Activated CD4-positive, alpha-beta memory T cell treated with anti-CD3 and anti-CD28 coated beads, Interleukin-2, amount 10 ng/mL, durations not matched to agents 7 days and 5 days (primary cell): ENCODE measurements at regions of chr18 and their contacts with region 1.

Region 1: GRCh38 chr18:80034068-80034851 is at the start of gene RBFA:
- DNase-seq: peak; percentile 99
- H3K4me3 Mint-ChIP-seq: peak within 1 kb of the TSS; percentile 83
- H3K27ac Mint-ChIP-seq: peak within 1 kb of the TSS; percentile 82
- H3K4me1 Mint-ChIP-seq: peaks cover 28% of the 10 kb centered on the region
- H3K27me3 Mint-ChIP-seq: no peaks in the 10 kb centered on the region
- total RNA-seq, gene RBFA: 13.9 to 16.8 TPM

Region 2: DNA sequence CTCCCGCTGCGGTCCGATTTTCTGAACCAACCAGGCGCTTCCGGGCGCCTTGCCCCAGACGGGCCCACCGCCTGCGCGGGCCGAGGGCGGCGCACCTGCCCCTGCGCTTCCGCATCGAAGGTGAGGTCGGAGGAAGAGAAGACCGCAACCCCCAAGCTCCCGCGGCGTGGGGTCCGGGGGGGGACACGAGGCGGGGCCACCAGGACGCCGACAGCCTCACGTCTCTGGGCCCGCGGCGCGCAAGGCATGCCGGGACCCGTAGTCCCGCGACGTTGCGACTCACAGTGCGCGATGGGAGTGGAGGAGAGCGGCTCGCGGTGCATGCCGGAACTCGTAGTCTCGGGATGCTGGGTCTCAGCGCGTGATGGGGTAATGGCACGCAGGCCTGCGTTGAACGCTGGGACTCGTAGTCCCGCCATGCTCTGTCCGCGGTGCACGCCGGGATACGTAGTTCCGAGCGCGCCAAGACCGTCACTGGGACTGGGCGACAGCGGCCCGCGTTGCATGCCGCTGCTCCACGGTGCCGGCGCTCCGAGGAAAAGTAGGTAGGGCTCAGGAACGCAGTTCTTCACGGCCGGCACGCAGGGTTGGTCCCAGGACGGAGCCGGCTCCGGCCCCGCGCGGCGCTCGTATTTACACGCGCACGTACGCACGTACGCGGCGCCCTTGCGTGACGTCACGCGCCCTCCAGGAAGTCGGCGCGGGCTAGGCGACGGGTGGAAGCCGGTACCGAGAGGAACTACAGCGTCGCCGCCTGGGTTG is 355.0 kb before region 1 on chr18 and contains the start of gene CTDP1:
- CTCF ChIA-PET with region 1: interaction called, 3 read pairs
- POLR2A ChIA-PET with region 1: interaction called, 16 read pairs
- DNase-seq: peak; percentile 99
- H3K4me3 Mint-ChIP-seq: peak within 1 kb of the TSS; percentile 94
- H3K27ac Mint-ChIP-seq: peak within 1 kb of the TSS; percentile 96
- H3K4me1 Mint-ChIP-seq: peaks cover 53% of the 10 kb centered on the region
- H3K27me3 Mint-ChIP-seq: no peaks in the 10 kb centered on the region
- total RNA-seq, gene CTDP1: 34.8 to 38.0 TPM

Region 3: GRCh38 chr18:80004600-80005342 is 29.5 kb before region 1 on chr18:
- CTCF ChIA-PET with region 1: no interaction called
- POLR2A ChIA-PET with region 1: no interaction called
- DNase-seq: no peak
- H3K4me3 Mint-ChIP-seq: no peak overlapping the region
- H3K27ac Mint-ChIP-seq: no peak overlapping the region
- H3K4me1 Mint-ChIP-seq: no peaks in the 10 kb centered on the region
- H3K27me3 Mint-ChIP-seq: no peaks in the 10 kb centered on the region